Activated CD4-positive, alpha-beta memory T cell treated with anti-CD3 and anti-CD28 coated beads for 36 hours (primary cell): ENCODE measurements at regions of chr2 and their contacts with region 1.

Region 1: GRCh38 chr2:20642055-20642971 is 8.6 kb downstream of the HS1BP3 start:
- DNase-seq: peak; percentile 81
- H3K4me3 Mint-ChIP-seq: no peak overlapping the region
- H3K27ac Mint-ChIP-seq: no peak overlapping the region
- H3K4me1 Mint-ChIP-seq: peaks cover 2% of the 10 kb centered on the region
- H3K27me3 Mint-ChIP-seq: no peaks in the 10 kb centered on the region

Region 2: GRCh38 chr2:20242060-20243006 is 400.0 kb before region 1 on chr2:
- CTCF ChIA-PET with region 1: interaction called, 5 read pairs
- POLR2A ChIA-PET with region 1: no interaction called
- intact Hi-C with region 1: loop called (anchors 5 kb)
- DNase-seq: peak; percentile 54
- H3K4me3 Mint-ChIP-seq: peak overlapping the region; percentile 41
- H3K27ac Mint-ChIP-seq: no peak overlapping the region
- H3K4me1 Mint-ChIP-seq: peaks cover 3% of the 10 kb centered on the region
- H3K27me3 Mint-ChIP-seq: peaks cover 7% of the 10 kb centered on the region

Region 3: GRCh38 chr2:20398956-20399567 is 243.3 kb before region 1 on chr2:
- CTCF ChIA-PET with region 1: interaction called, 16 read pairs
- POLR2A ChIA-PET with region 1: no interaction called
- intact Hi-C with region 1: loop called (anchors 5 kb)
- DNase-seq: no peak
- H3K4me3 Mint-ChIP-seq: no peak overlapping the region
- H3K27ac Mint-ChIP-seq: no peak overlapping the region
- H3K4me1 Mint-ChIP-seq: no peaks in the 10 kb centered on the region
- H3K27me3 Mint-ChIP-seq: peaks cover 6% of the 10 kb centered on the region

Region 4: DNA sequence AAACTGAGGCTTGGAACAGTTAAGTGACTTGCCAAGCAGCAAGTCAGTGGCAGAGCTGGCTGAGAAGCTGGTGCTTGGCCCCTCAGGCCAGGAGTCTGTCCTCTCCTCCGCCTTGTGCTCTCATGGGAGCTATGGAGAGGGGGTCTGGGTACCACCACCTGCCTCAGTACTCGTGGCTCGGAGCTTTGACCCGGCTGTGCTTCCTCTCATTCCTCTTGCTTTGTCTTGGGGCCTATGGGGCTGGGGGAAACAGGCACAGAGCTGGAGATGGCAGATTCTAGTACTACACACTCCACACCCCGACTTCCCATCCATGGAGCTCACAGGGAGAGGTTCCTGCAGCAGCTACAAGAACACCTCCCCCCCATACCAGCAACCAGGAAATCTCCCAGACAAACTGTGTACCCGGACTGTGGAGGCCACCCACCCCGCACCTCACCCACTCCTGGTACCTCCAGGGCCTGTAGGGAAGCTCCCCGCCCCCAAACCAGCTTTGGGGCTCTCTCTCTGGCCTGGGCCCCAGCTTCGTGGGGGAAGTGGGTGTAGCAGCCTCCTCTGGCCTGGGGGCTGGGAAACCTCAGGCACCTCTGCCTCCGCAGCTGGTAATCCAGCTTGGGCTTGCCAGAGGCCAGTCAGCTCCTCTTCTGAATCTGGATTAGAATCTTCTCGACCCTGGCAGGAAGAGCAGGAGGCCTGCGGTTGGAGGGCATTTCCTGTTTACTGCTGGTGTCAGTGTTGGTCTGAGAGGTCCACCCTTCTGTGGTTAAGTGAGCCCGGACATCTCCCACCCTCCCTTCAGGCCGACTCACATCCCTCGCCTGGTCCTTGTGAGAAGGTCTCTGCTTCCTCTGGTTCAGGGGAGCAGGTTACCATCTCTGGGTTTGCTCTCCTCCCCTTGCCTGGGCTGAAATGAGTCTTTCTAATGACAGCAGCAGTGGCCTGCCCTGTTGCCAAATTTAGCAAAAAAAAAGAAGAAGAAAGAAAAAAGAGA is 217.7 kb before region 1 on chr2:
- CTCF ChIA-PET with region 1: interaction called, 13 read pairs
- POLR2A ChIA-PET with region 1: no interaction called
- intact Hi-C with region 1: no loop called
- DNase-seq: peak; percentile 48
- H3K4me3 Mint-ChIP-seq: no peak overlapping the region
- H3K27ac Mint-ChIP-seq: no peak overlapping the region
- H3K4me1 Mint-ChIP-seq: peaks cover 16% of the 10 kb centered on the region
- H3K27me3 Mint-ChIP-seq: no peaks in the 10 kb centered on the region

Region 5: GRCh38 chr2:20438334-20439192 is 203.8 kb before region 1 on chr2:
- CTCF ChIA-PET with region 1: interaction called, 144 read pairs
- POLR2A ChIA-PET with region 1: no interaction called
- intact Hi-C with region 1: loop called (anchors 1 kb)
- DNase-seq: peak; percentile 3
- H3K4me3 Mint-ChIP-seq: no peak overlapping the region
- H3K27ac Mint-ChIP-seq: no peak overlapping the region
- H3K4me1 Mint-ChIP-seq: peaks cover 2% of the 10 kb centered on the region
- H3K27me3 Mint-ChIP-seq: peaks cover 14% of the 10 kb centered on the region

Region 6: GRCh38 chr2:20446917-20447436 is 195.3 kb before region 1 on chr2 and contains the start of gene RHOB:
- CTCF ChIA-PET with region 1: interaction called, 144 read pairs
- POLR2A ChIA-PET with region 1: interaction called, 12 read pairs
- intact Hi-C with region 1: loop called (anchors 1 kb)
- DNase-seq: peak; percentile 94
- H3K4me3 Mint-ChIP-seq: peak within 1 kb of the TSS; percentile 76
- H3K27ac Mint-ChIP-seq: peak within 1 kb of the TSS; percentile 23
- H3K4me1 Mint-ChIP-seq: peaks cover 10% of the 10 kb centered on the region
- H3K27me3 Mint-ChIP-seq: peaks cover 8% of the 10 kb centered on the region
- total RNA-seq, gene RHOB: 31.6 to 33.6 TPM